Aorta (tissue), 5 donors: ENCODE measurements at regions of chr16 and their contacts with region 1.

Region 1: DNA sequence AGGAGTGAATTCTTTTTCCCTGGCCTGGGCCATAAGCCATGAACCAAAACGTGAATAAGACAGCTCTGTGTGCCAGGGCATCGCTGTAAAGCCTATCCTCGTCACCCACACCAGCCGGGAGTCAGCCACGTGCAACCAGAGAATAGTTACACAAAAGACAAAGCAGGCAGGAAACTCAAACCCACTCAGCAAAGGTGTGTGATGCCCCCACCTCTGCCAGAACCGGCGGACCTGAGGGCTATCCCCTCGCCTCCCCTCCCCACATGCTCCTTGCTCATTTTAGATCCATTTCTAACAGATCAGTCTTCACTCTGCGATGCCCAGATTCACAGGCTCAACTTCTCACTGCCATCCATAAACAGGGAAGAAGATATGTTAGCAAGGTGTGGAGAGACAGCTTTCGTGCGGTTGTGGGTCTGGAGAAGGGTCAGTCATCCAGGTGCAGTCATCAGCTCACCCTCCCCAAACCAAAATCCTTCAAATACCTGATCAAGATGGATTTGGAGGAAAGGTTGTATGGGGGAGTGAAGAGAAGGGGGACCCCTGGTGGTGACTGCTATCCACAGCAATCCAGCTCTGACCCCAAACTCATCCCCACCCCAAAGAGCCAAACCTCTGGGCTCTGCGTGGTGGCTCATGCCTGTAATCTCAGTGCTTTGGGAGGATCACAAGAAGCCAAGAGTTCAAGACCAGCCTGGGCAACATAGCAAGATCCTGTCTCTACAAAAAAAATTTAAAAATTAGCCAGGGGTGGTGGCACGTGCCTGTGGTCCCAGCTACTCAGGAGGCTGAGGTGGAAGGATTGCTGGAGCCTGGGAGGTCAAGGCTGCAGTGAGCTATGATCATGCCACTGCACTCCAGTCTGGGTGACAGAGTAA is 219.2 kb downstream of the C16orf78 start:
- DNase-seq: no peak
- ATAC-seq: peak; percentile 45
- H3K4me3 ChIP-seq: no peak overlapping the region
- H3K27ac ChIP-seq: no peak overlapping the region
- H3K4me1 ChIP-seq: no peaks in the 10 kb centered on the region
- H3K27me3 ChIP-seq: no peaks in the 10 kb centered on the region

Region 2: DNA sequence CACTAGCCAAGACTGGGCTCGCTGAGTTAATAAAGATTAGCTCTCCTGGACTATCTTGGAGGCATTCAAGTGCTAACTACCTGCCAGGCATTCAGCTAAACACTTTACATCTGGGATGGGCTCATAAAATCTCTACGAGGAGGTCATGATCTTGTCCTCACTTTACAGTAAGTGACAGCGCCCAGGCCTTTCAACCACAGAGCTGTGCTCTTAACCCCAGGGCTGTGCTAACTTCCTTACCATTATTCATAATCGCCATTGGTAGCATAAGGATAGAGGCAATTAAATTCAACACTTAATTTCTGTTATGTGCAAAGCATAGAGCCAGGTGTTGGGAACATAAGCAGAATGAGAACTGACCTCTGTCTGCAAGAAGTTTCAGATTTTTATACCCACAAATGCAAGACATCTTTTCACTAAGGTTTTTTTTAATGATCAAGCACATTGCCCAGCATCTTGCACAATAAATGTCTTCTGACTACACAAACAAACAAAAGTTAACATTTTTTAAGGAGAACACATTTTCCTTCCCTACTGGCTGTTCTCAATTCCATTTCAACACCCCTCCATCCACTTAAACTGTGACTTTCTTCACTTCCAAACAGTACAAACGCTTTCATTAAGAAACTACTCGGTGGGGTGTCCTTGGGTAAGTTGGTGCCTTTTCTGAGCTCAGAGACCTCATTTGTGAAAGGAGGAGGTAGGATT is 46.9 kb before region 1 on chr16:
- intact Hi-C with region 1: loop called in 1 of 2 experiments (anchors 5 kb)
- DNase-seq: no peak
- ATAC-seq: no peak
- H3K4me3 ChIP-seq: no peak overlapping the region
- H3K27ac ChIP-seq: no peak overlapping the region
- H3K4me1 ChIP-seq: no peaks in the 10 kb centered on the region
- H3K27me3 ChIP-seq: no peaks in the 10 kb centered on the region

Region 3: DNA sequence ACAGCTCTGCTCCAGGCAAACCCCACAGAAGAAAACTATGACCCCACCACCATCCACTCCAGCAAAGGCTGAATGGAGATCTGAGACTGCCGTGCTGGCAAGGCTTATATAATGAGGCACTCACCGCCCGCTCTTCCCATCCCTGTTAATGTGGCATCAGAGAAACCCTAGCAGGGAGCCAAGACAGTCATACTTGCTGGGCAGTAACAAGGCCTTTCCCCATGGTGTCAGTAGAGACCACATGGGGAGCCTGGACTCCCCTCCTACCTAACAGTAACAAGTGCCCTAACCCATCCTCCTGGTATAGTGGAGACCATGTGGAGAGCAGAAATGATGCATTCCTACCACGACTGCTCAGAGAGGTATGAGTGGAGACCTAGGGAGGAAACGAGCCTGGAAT is 16.0 kb after region 1 on chr16:
- intact Hi-C with region 1: no loop called
- DNase-seq: peak in 1 of 2 donors; percentile 55
- ATAC-seq: peak; percentile 84
- H3K4me3 ChIP-seq: no peak overlapping the region
- H3K27ac ChIP-seq: no peak overlapping the region
- H3K4me1 ChIP-seq: no peaks in the 10 kb centered on the region
- H3K27me3 ChIP-seq: no peaks in the 10 kb centered on the region